Tibial artery (tissue), 4 donors: ENCODE measurements at regions of chr1 and their contacts with region 1.

Region 1: DNA sequence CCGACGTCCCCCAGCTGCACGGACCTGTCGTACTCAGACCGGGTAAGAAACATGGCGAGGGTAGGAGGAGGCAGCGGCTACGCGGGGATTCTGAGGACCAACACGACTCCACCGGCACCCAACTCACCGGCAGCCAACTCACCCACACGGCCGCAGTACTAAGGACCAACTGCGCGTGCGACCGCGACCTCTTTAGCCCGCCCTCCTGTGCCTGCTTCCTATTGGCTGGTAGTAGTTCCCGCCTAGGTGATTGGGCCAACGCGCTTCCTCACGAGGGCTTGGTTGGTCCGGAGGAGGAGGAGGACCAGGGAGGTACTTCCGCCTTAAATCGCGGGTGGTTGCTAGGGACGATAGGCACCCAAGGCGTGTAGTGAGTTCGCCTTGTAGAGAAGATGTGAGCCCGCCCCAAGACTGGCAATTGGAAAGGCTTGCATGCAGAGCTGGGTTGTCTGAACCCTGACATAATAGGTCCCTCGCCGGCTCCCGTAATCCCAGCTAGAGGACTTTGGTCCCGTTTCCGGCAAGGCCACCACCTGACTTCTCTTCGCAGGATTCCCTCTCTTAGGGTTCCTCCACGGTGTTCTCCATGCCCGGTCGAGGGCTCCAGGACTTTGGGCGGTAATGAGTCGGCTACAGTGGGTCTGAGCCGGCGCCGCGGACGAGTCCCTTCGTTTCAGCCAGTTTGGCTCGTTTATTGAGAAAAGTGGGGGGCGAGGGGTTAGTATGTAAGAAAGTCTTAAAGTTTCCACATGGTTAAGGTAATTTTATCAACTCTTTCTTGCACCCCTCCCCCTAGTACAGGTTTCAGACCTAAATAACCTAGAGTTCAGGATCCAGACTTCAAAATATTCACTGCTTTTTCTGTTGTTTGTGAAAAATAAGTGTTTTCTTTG is at the start of gene PSMA5:
- DNase-seq: peak; percentile 99
- H3K4me3 ChIP-seq: peak within 1 kb of the TSS; percentile 83 to 92
- H3K27ac ChIP-seq: peak within 1 kb of the TSS; percentile 90 to 95
- H3K4me1 ChIP-seq: peaks cover 0 to 33% (median 19%) of the 10 kb centered on the region in 4 donors
- H3K27me3 ChIP-seq: no peaks in the 10 kb centered on the region
- CTCF ChIP-seq: peak in 1 of 2 experiments; percentile 9

Region 2: DNA sequence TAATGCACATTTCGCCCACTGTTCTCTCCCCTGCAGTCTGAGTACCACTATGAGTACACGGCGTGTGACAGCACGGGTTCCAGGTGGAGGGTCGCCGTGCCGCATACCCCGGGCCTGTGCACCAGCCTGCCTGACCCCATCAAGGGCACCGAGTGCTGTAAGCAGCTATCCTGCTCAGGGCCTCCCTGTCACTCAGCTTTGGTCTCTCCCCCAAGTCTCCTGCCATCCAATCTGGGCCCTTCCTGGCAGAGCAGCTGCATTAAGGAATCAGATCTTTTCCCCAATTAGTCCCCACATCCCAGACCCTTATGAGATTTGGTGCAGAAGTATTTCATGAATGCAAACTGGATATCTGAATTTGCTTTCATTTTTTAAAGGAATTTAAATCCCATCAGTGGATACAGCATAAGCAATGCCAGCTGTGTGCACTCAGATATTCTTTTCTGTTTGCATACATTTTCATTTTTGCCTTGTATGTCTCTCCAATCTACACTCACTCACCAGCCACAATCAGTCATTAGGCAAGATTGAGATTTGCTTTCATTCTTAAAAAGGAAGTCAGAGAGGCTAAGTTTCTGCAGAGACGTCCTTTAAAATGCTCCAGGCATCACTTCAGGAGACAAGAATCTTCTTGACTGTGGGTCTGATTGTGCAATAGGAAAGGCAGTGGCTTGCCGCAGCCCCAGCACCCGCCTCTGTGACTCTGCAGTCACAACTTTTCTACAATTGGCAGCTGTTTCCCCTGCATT is 264.5 kb before region 1 on chr1:
- intact Hi-C with region 1: no loop called
- DNase-seq: peak; percentile 41 to 72
- H3K4me3 ChIP-seq: no peak overlapping the region
- H3K27ac ChIP-seq: peak overlapping the region in 1 of 2 donors; percentile 53
- H3K4me1 ChIP-seq: peaks cover 0 to 15% (median 12%) of the 10 kb centered on the region in 4 donors
- H3K27me3 ChIP-seq: no peaks in the 10 kb centered on the region
- CTCF ChIP-seq: no peak

Region 3: GRCh38 chr1:109466452-109467300 is 40.2 kb after region 1 on chr1 and contains the start of gene SYPL2:
- intact Hi-C with region 1: loop called (anchors 5 kb)
- DNase-seq: no peak
- H3K4me3 ChIP-seq: peak within 1 kb of the TSS; percentile 55 to 76
- H3K27ac ChIP-seq: peak within 1 kb of the TSS; percentile 66 to 73
- H3K4me1 ChIP-seq: peaks cover 0 to 19% (median 7%) of the 10 kb centered on the region in 4 donors
- H3K27me3 ChIP-seq: peaks cover 0 to 14% of the 10 kb centered on the region in 2 donors
- CTCF ChIP-seq: no peak

Region 4: GRCh38 chr1:109532365-109533136 is 106.0 kb after region 1 on chr1:
- intact Hi-C with region 1: loop called (anchors 10 kb)
- DNase-seq: peak; percentile 78 to 88
- H3K4me3 ChIP-seq: peak overlapping the region; percentile 34 to 36
- H3K27ac ChIP-seq: peak overlapping the region; percentile 41 to 63
- H3K4me1 ChIP-seq: peaks cover 0 to 31% (median 14%) of the 10 kb centered on the region in 4 donors
- H3K27me3 ChIP-seq: no peaks in the 10 kb centered on the region
- CTCF ChIP-seq: peak; percentile 97 to 99